HAP-1 (cell line): ENCODE measurements at regions of chr6 and their contacts with region 1.

Region 1: GRCh38 chr6:99119109-99120031 is 171.6 kb upstream of the FBXL4 start:
- DNase-seq: peak; percentile 61 to 68
- H3K4me3 ChIP-seq: no peak overlapping the region
- H3K4me1 ChIP-seq: no peaks in the 10 kb centered on the region
- H3K27me3 ChIP-seq: peaks cover 3% of the 10 kb centered on the region

Region 2: DNA sequence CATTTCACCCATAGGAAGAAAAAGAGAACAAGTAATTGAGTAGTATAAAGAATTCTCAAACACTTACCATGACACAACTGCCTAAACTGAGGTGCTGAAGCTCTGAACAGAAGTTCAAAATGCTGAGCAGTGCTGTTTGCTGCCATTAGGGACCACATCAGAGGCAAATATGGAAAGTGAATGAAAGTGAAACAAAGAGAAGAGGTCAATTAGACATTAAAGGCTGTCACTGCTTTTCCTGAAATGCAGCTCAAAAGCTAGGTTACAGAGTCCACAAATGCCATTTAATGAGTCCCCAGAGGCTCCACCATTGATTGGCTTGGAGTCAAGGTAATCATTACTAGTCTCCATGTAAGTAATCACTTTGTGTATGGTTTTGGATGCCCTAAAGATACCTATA is 238.9 kb before region 1 on chr6:
- in situ Hi-C with region 1: loop called (anchors 25 kb)
- DNase-seq: no peak
- H3K4me3 ChIP-seq: no peak overlapping the region
- H3K4me1 ChIP-seq: peaks cover 6% of the 10 kb centered on the region; the same call in 1 of the 2 replicates
- H3K27me3 ChIP-seq: no peaks in the 10 kb centered on the region

Region 3: GRCh38 chr6:99536491-99536890 is 417.1 kb after region 1 on chr6:
- in situ Hi-C with region 1: no loop called
- DNase-seq: no peak
- H3K4me3 ChIP-seq: no peak overlapping the region
- H3K4me1 ChIP-seq: no peaks in the 10 kb centered on the region
- H3K27me3 ChIP-seq: no peaks in the 10 kb centered on the region